ENCODE measurements at regions of chr15 and their contacts with region 1.

Region 1: GRCh38 chr15:99928429-99928981 is 195.3 kb upstream of the LYSMD4 start:
- DNase-seq: peak in 1 of 2 experiments; percentile 80
- H3K4me3 ChIP-seq: peak overlapping the region; percentile 51 to 80 (median 76)
- H3K27ac ChIP-seq: peak overlapping the region; percentile 45; the same call in 1 of the 2 replicates
- H3K4me1 ChIP-seq: peaks cover 5 to 13% (median 10%) of the 10 kb centered on the region in 4 experiments; a peak in 6 of 7 replicates
- H3K27me3 ChIP-seq: peaks cover 1 to 11% (median 8%) of the 10 kb centered on the region in 4 experiments; a peak in 6 of 7 replicates
- CTCF ChIP-seq: peak; percentile 34 to 76 (median 60); a peak in 3 of 4 replicates
- EP300 ChIP-seq: no peak
- POLR2A ChIP-seq: no peak
- RAD21 ChIP-seq: peak; percentile 56 to 68

Region 2: GRCh38 chr15:100131321-100132224 is 203.1 kb after region 1 on chr15:
- CTCF ChIA-PET with region 1: interaction called, 10 read pairs
- POLR2A ChIA-PET with region 1: interaction called, 3 read pairs
- DNase-seq: no peak
- H3K4me3 ChIP-seq: no peak overlapping the region
- H3K27ac ChIP-seq: no peak overlapping the region
- H3K4me1 ChIP-seq: no peaks in the 10 kb centered on the region
- H3K27me3 ChIP-seq: no peaks in the 10 kb centered on the region
- CTCF ChIP-seq: peak; percentile 10 to 17 (median 14); a peak in 3 of 4 replicates
- EP300 ChIP-seq: no peak
- POLR2A ChIP-seq: no peak
- RAD21 ChIP-seq: peak; percentile 33 to 50; a peak in 3 of 4 replicates